Prostate gland (tissue), 2 donors: ENCODE measurements at regions of chr2 and their contacts with region 1.

Region 1: DNA sequence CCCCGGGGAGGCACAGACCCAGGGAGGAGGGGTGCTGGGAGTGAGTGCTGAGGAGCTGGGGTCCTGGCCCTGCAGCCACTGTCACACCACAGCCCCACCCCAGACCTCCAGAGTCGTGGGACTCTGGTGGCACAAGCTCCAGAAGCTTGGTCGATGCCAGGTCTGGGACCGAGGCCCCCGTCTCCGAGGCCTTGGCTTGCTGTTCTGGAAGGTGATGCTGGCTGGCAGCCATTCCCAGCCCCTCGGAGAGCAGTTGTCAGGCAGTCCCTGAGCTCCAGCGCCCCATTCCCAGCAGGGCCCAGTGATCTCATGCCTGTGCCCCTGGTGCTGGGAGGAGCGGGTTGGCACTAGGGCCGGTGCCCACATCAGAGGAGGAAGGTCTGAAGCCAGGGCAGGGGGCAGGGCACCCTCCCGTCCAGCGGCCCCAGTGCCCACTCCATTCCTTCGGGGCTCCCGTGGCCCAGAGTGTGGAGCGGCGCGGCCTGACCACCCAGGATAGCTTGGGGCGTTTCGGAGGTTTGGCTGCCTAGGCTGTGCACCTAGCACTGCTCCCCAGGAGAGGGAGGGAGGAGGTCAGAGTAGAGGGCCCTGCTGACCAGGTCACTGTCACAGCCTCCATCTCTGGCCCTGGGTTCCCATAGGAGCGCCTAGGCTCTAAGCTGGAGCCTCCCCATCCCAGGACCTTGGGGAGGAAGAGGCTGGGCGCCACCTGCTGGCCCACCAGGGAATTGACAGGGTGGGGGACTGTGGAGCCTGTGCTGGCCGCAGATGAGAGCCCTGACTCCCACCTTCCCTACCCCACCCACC is 16.8 kb upstream of the ALPI start:
- DNase-seq: no peak
- H3K4me3 ChIP-seq: no peak overlapping the region
- H3K27ac ChIP-seq: no peak overlapping the region
- H3K4me1 ChIP-seq: no peaks in the 10 kb centered on the region
- H3K27me3 ChIP-seq: no peaks in the 10 kb centered on the region
- CTCF ChIP-seq: peak; percentile 35 to 65 (median 47)
- POLR2A ChIP-seq: no peak

Region 2: DNA sequence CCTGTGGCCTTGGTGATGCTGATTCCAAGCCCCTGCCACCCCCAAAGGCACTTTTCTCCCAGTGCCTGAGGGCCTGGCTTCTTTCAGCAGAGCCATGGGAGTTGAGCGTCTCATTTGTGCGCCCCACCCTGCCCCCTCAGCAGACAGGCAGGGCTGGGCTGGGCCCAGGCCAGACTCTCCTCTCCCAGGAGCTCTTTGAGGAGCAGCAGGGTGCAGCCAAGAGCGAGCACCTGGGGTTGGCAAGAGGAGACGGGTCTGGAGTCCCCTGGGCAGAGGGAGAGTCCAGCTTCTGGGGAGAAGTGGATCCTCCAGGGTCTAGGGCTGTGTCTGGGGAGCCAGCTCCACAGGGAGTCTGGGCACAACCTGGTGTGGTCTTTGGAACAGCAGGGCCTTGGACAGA is 534.1 kb before region 1 on chr2:
- intact Hi-C with region 1: loop called (anchors 5 kb)
- DNase-seq: no peak
- H3K4me3 ChIP-seq: no peak overlapping the region
- H3K27ac ChIP-seq: no peak overlapping the region
- H3K4me1 ChIP-seq: no peaks in the 10 kb centered on the region
- H3K27me3 ChIP-seq: no peaks in the 10 kb centered on the region
- CTCF ChIP-seq: no peak
- POLR2A ChIP-seq: no peak

Region 3: DNA sequence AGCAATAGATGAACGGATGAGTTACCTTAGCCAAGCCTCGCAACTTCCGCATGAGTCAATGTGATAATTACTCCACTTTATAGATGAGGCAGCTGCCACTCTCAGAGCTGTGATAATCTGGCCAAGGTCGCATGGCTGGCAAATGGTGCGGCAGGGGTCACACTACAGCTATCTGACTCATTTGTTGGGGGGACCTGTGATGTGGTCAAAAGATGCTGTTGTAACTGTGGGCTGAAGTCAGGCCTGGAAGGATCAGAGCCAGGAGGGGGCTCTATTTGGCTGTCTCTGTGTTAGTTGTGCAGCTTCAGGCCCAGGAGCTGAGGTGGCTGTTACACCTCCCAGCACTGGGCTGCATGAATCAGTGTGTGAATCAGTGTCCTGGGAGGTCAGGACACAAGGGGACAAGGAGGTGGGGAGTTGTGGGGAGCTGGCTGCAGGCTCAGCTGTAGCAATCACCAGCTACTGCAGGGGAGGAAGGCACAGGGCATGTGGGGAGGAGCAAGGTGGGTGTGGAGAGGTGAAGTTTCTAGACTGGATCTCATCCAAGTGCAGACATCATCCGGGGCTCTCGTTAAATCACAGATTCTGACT is 540.8 kb after region 1 on chr2:
- intact Hi-C with region 1: no loop called
- DNase-seq: no peak
- H3K4me3 ChIP-seq: no peak overlapping the region
- H3K27ac ChIP-seq: no peak overlapping the region
- H3K4me1 ChIP-seq: no peaks in the 10 kb centered on the region
- H3K27me3 ChIP-seq: no peaks in the 10 kb centered on the region
- CTCF ChIP-seq: no peak
- POLR2A ChIP-seq: no peak